ENCODE measurements at regions of chr16 and their contacts with region 1.

Region 1: DNA sequence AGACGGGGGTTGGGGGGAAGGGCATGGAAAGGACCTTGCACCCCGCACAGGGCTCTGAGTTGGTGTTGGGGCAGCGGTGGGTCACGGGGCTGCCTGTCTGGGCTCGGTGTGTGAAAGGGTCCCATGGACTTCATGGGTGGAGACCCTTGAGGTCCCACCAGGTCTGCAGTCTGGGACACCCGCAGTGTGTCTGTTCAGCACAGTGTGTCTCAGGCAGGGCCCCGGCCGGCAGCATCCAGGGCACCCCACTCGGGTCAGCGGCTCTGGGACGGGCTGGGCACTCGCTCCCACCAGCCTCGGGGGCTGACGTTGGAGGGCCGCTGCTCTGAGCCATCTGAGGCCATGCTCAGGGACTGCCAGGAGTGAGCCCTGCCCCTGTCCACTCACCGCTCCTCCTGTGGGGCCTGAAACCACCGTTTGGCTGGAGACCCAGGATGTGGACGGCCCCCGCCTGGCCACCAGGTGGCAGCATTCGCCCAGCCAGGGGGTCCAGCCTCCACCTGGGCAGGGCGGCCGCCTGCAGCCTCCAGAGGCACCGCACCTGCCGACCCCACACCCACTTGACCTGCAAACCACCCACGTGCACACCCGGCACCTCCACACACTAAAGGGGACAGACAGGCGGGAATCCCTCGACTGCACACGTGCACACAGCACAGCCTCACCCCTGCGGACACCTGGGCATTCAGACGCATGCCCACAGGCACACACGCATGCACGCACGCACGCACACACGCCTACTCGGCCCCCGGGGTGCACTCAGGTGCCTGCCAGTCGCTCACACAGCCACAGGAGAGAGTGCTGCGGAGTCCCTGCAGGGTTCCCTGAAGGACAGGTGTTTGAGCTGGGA is 10.1 kb upstream of the ZFPM1 start:
- DNase-seq: no peak
- ATAC-seq: peak; percentile 98
- H3K4me3 ChIP-seq: no peak overlapping the region
- H3K27ac ChIP-seq: no peak overlapping the region
- H3K4me1 ChIP-seq: peaks cover 4% of the 10 kb centered on the region
- H3K27me3 ChIP-seq: no peaks in the 10 kb centered on the region
- CTCF ChIP-seq: peak; percentile 82 to 97 (median 93)
- EP300 ChIP-seq: no peak
- POLR2A ChIP-seq: no peak
- RAD21 ChIP-seq: peak; percentile 86

Region 2: DNA sequence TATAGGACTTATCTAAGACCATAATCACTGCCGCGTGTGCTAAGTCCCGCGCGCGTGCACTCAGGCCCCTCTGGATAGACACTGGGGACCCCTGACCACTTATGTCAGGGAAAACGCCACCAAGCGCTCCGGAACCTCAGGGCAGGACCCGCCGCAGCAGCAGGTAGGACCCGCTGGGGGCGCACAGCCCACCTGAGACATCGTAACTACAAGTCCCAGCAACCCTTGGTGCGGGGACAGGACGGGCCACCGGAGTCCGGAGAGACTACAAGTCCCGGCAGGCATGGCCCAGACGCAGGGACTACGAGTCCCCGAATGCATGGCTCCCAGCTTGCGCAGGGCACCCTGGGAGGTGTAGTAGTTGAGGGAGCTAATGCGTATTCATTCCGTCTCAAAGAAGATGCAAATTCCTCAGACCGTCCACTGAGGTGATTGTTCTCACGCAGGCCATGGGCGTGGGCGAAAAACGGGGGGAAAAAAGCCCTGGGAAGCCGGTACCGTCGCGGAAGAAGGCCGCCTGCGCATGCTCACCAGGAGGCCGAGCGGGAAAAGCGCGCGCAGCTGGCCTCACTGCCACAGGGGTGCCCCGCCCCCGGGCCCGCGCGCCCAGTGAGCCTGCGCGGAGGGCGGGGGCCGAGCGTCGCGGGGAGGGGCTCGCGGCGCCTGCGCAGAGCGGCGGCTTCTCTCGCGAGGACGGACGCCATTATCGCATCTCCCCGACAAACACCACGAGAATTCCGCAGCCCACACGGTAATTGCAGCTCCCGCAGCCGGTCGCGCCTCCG is 492.0 kb before region 1 on chr16 and contains the start of gene BANP:
- CTCF ChIA-PET with region 1: no interaction called
- POLR2A ChIA-PET with region 1: no interaction called
- RAD21 ChIA-PET with region 1: no interaction called
- SMC1A ChIA-PET with region 1: no interaction called
- in situ Hi-C with region 1: loop called (anchors 25 kb)
- intact Hi-C with region 1: loop called (anchors 5 kb)
- DNase-seq: peak; percentile 97
- ATAC-seq: peak; percentile 97
- H3K4me3 ChIP-seq: peak within 1 kb of the TSS; percentile 91
- H3K27ac ChIP-seq: peak within 1 kb of the TSS; percentile 98
- H3K4me1 ChIP-seq: peaks cover 14% of the 10 kb centered on the region
- H3K27me3 ChIP-seq: no peaks in the 10 kb centered on the region
- CTCF ChIP-seq: peak; percentile 46 to 76 (median 52)
- EP300 ChIP-seq: no peak
- POLR2A ChIP-seq: peak; percentile 62; the same call in 1 of the 2 replicates
- RAD21 ChIP-seq: no peak
- polyA plus RNA-seq, gene BANP: 3.9 to 7.3 TPM

Region 3: DNA sequence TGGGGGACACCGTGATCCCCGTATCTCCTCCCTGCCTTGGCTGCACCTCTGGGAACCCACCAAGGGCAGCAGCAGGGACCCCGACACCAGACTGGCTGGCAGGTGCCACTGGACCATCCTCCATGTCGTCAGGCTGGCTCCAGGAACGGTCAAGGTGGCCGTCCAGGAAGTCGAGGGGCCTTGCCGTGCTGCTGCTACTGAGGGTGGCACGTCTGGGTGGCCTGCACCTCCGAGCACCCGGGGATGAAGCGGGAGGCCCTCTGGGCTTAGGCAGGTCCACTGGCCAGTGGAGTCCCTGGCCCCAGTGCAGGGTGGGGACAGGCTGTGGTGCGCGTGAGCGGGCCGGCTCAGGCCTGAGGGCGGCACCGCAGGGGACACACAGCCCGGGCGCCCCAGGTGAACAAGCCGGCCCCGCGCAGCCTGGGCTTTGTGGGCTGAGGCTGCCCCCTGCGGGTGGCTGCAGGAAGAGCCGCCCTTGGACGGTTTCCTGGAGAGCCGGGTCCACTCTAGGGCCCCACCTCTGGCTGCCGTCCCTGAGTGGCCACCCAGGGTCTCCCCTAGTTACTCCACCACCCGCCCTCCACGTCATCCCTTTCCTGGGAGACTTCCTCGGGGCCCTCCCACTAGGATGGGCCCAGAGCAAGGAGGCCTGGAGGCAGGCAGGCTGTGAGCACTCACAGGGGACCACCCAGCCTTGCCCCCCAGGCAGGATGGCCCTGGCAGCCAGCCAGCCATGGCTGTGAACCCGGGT is 84.4 kb after region 1 on chr16:
- CTCF ChIA-PET with region 1: interaction called, 4 read pairs
- POLR2A ChIA-PET with region 1: interaction called, 3 read pairs
- RAD21 ChIA-PET with region 1: no interaction called
- SMC1A ChIA-PET with region 1: interaction called, 3 read pairs
- in situ Hi-C with region 1: no loop called
- intact Hi-C with region 1: loop called (anchors 1 kb)
- DNase-seq: no peak
- ATAC-seq: peak; percentile 94
- H3K4me3 ChIP-seq: no peak overlapping the region
- H3K27ac ChIP-seq: no peak overlapping the region
- H3K4me1 ChIP-seq: no peaks in the 10 kb centered on the region
- H3K27me3 ChIP-seq: no peaks in the 10 kb centered on the region
- CTCF ChIP-seq: peak; percentile 76 to 90 (median 89)
- EP300 ChIP-seq: no peak
- POLR2A ChIP-seq: peak; percentile 32; the same call in 1 of the 2 replicates
- RAD21 ChIP-seq: peak; percentile 95

Region 4: GRCh38 chr16:88561485-88562369 is 118.8 kb after region 1 on chr16:
- CTCF ChIA-PET with region 1: interaction called, 6 read pairs
- POLR2A ChIA-PET with region 1: no interaction called
- RAD21 ChIA-PET with region 1: interaction called, 8 read pairs
- SMC1A ChIA-PET with region 1: interaction called, 5 read pairs
- in situ Hi-C with region 1: no loop called
- intact Hi-C with region 1: loop called (anchors 1 kb)
- DNase-seq: no peak
- ATAC-seq: peak; percentile 73
- H3K4me3 ChIP-seq: no peak overlapping the region
- H3K27ac ChIP-seq: no peak overlapping the region
- H3K4me1 ChIP-seq: no peaks in the 10 kb centered on the region
- H3K27me3 ChIP-seq: no peaks in the 10 kb centered on the region
- CTCF ChIP-seq: peak; percentile 63 to 80 (median 77)
- EP300 ChIP-seq: no peak
- POLR2A ChIP-seq: no peak
- RAD21 ChIP-seq: peak; percentile 89

Measured in GM12878 (cell line).